ENCODE measurements at regions of chr10 and their contacts with region 1.

Region 1: GRCh38 chr10:70146489-70147258 is at the start of gene TYSND1:
- DNase-seq: peak; percentile 94 to 98
- ATAC-seq: peak; percentile 87 to 98 (median 96)
- H3K4me3 ChIP-seq: peak within 1 kb of the TSS; percentile 74 to 90 (median 81)
- H3K27ac ChIP-seq: peak within 1 kb of the TSS; percentile 83 to 97 (median 92)
- H3K4me1 ChIP-seq: peaks cover 8 to 28% (median 20%) of the 10 kb centered on the region in 9 donors
- H3K27me3 ChIP-seq: no peaks in the 10 kb centered on the region
- CTCF ChIP-seq: peak; percentile 49 to 88 (median 70)
- total RNA-seq, gene TYSND1: 3.5 to 6.5 (median 4.6) TPM

Region 2: DNA sequence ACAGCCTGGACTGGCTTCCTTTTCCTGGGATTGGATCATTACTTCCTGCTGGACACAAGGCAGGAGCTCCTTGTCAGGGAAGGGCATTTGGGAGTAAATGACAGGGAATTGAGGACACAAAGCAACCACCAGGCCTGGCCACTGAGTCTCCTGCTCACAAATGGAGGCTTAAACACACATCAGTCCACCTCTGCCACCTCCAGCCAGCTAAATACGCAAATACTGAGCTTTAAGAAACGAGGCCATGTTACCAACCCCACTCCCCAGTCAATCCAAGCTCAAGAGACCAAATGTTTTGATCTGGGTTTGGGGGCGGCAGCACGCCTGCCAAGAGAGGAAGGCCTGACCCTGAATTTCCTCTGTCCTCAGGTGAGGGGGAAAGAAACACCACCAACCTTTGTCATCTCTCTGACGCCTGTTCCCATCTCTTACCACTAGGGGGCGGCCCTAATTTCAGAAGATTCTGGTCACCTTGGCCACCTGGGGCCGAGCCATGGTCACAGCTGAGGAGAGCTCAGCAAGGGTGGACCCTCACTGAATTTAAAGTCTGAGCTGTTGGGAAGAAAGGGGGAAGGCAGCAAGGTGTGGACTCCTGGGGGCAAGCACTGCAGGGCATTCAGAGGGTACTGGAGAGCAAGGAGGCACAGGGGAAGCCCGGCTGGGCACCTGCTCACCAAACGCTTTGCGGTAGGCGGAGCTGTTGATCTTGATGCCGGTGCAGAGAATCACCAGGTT is 30.6 kb before region 1 on chr10:
- intact Hi-C with region 1: loop called in 3 of 10 experiments (anchors 1 to 2 kb)
- DNase-seq: peak; percentile 30 to 46
- ATAC-seq: peak in 7 of 8 donors; percentile 24 to 63 (median 52)
- H3K4me3 ChIP-seq: no peak overlapping the region
- H3K27ac ChIP-seq: peak overlapping the region in 1 of 10 donors; percentile 4
- H3K4me1 ChIP-seq: peaks cover 0 to 15% (median 0%) of the 10 kb centered on the region in 9 donors
- H3K27me3 ChIP-seq: no peaks in the 10 kb centered on the region
- CTCF ChIP-seq: peak; percentile 77 to 93 (median 88)

Region 3: GRCh38 chr10:70169649-70170364 is 23.1 kb after region 1 on chr10:
- intact Hi-C with region 1: loop called in 1 of 10 experiments (anchors 1 kb)
- DNase-seq: no peak
- ATAC-seq: peak in 7 of 8 donors; percentile 32 to 57 (median 48)
- H3K4me3 ChIP-seq: peak overlapping the region; percentile 59 to 99 (median 84)
- H3K27ac ChIP-seq: peak overlapping the region; percentile 52 to 96 (median 92)
- H3K4me1 ChIP-seq: peaks cover 0 to 60% (median 44%) of the 10 kb centered on the region in 9 donors
- H3K27me3 ChIP-seq: no peaks in the 10 kb centered on the region
- CTCF ChIP-seq: no peak

Measured in heart right ventricle (tissue), 16 donors.